ENCODE measurements at regions of chr10 and their contacts with region 1.

Region 1: GRCh38 chr10:94362360-94363250 is at the start of gene NOC3L:
- DNase-seq: peak; percentile 65
- H3K4me3 ChIP-seq: peak within 1 kb of the TSS; percentile 57 to 94 (median 64)
- H3K27ac ChIP-seq: peak within 1 kb of the TSS; percentile 63 to 90 (median 79)
- H3K4me1 ChIP-seq: peaks cover 3 to 26% (median 19%) of the 10 kb centered on the region in 3 donors
- H3K27me3 ChIP-seq: no peaks in the 10 kb centered on the region
- CTCF ChIP-seq: peak; percentile 71 to 90 (median 82)
- POLR2A ChIP-seq: no peak
- total RNA-seq, gene NOC3L: 11.3 to 24.8 (median 18.5) TPM

Region 2: GRCh38 chr10:94443047-94443446 is 80.4 kb after region 1 on chr10:
- intact Hi-C with region 1: loop called (anchors 10 kb)
- DNase-seq: no peak
- H3K4me3 ChIP-seq: no peak overlapping the region
- H3K27ac ChIP-seq: no peak overlapping the region
- H3K4me1 ChIP-seq: peaks cover 0 to 12% (median 0%) of the 10 kb centered on the region in 3 donors
- H3K27me3 ChIP-seq: no peaks in the 10 kb centered on the region
- CTCF ChIP-seq: no peak
- POLR2A ChIP-seq: no peak

Region 3: DNA sequence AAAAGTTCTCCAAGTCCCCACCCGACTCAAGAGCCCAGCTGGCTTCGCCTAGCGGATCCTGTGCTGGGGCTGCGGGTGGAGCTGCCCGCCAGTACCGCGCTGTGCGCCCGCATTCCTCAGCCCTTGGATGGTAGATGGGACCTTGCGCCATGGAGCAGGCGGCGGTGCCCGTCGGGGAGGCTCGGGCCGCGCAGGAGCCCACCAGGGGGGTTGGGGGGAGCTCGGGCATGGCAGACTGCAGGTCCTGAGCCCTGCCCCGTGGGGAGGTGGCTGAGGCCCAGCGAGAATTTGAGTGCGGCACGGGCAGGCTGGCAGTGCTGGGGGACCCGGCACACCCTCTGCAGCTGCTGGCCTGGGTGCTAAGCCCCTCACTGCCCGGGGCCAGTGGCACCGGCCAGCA is 96.8 kb after region 1 on chr10:
- intact Hi-C with region 1: no loop called
- DNase-seq: no peak
- H3K4me3 ChIP-seq: no peak overlapping the region
- H3K27ac ChIP-seq: no peak overlapping the region
- H3K4me1 ChIP-seq: no peaks in the 10 kb centered on the region
- H3K27me3 ChIP-seq: no peaks in the 10 kb centered on the region
- CTCF ChIP-seq: no peak
- POLR2A ChIP-seq: no peak

Measured in esophagus squamous epithelium (tissue), 5 donors.